Mucosa of descending colon (tissue), 3 donors: ENCODE measurements at regions of chr12 and their contacts with region 1.

Region 1: DNA sequence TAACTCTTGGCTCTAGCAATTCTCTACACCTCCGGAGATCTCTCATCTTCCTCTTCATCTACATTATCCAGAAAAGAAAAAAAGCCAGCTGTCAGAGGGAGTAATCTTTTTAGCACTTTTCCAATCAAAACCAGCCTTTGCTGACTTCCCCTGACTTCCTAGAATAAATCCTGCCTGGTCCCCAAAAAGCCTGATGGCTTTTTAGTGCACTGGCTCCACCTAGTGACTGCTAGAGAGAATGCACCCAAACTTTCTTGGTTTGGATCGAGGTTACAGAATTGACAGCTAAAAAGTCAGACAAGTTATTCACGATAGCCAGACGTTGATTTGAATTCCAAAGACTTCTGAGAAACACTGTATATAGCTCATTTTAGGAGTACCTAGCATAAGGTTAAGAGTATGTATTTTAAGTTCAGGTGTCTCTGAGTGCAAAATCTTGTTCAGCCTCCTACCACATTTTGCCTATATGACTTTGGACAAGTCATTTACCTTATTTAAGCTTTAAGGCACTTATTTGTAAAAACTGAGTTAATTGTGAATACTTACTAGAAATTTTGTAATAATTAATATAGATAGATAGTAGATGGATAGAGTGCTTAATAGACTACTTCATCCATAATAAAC is 185.7 kb upstream of the GRIN2B start:
- DNase-seq: peak in 1 of 3 donors; percentile 55
- ATAC-seq: peak; percentile 74
- H3K4me3 ChIP-seq: no peak overlapping the region
- H3K4me1 ChIP-seq: no peaks in the 10 kb centered on the region
- CTCF ChIP-seq: peak; percentile 83

Region 2: GRCh38 chr12:13278249-13278787 is 888.8 kb before region 1 on chr12:
- intact Hi-C with region 1: loop called in 1 of 2 experiments (anchors 10 kb)
- DNase-seq: peak; percentile 63 to 76 (median 72)
- ATAC-seq: peak; percentile 93
- H3K4me3 ChIP-seq: no peak overlapping the region
- H3K4me1 ChIP-seq: peaks cover 7% of the 10 kb centered on the region
- CTCF ChIP-seq: peak; percentile 98

Region 3: GRCh38 chr12:13864081-13864673 is 302.9 kb before region 1 on chr12:
- intact Hi-C with region 1: loop called (anchors 5 to 10 kb)
- DNase-seq: peak; percentile 67 to 85 (median 84)
- ATAC-seq: peak; percentile 93
- H3K4me3 ChIP-seq: no peak overlapping the region
- H3K4me1 ChIP-seq: no peaks in the 10 kb centered on the region
- CTCF ChIP-seq: peak; percentile 71

Region 4: DNA sequence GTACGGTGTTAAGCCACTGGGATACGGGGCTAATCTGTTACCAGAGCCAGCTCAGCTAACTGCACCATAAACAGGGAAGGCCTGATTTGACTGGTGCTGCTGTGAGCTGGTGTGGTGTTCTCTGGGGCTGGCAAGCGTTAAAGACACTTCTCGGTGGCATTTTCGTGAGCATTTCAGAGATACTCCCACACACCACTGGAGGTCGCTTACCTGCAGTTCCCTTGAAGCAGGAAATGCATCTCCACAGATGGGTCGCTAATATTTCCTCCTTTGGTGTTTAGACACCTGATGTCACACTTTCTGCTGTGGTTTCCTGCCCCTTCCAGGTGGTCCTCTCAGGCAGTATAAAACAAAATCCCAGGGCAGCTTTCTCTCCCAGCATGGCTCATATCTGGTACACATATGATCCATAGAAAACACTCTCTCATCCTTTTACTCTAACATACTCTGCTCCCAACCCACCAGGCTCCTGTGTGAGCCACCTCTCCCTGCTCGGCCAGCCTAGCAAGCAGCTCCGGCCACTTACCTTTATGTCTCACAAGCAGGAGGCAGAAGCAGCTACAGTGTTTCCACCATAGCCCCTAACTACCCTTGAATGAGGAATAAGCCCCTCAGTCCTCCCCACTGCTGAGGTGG is 55.8 kb before region 1 on chr12:
- intact Hi-C with region 1: no loop called
- DNase-seq: peak in 1 of 3 donors; percentile 10
- ATAC-seq: peak; percentile 42
- H3K4me3 ChIP-seq: no peak overlapping the region
- H3K4me1 ChIP-seq: no peaks in the 10 kb centered on the region
- CTCF ChIP-seq: no peak